A673 (cell line): ENCODE measurements at regions of chr14 and their contacts with region 1.

Region 1: GRCh38 chr14:91418387-91419043 is 895 bp upstream of the CCDC88C start:
- DNase-seq: peak; percentile 78
- H3K4me3 ChIP-seq: peak overlapping the region; percentile 89
- H3K27ac ChIP-seq: no peak overlapping the region
- H3K4me1 ChIP-seq: peaks cover 17% of the 10 kb centered on the region
- H3K27me3 ChIP-seq: no peaks in the 10 kb centered on the region
- CTCF ChIP-seq: peak; percentile 97

Region 2: DNA sequence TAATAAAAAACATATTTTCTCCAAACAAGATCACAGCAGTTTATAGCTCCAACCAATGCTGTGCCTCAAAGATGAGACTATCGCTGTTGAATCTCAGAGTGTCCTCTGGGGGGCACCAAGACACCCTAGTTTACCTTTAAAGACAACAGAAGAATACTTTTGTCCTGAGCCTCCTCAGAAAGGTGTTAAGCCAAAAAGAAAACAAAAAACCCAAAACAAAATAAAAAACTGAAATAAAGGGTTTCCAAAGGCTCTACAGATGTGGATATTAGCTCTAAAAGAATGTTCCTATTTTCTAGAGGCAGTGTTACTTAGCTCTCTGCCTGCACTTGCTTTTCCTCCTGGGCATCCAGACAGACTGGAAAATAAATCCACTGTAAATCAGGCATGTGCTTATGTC is 515.4 kb before region 1 on chr14:
- CTCF ChIA-PET with region 1: no interaction called
- POLR2A ChIA-PET with region 1: no interaction called
- intact Hi-C with region 1: loop called (anchors 10 kb)
- DNase-seq: peak; percentile 70
- H3K4me3 ChIP-seq: no peak overlapping the region
- H3K27ac ChIP-seq: no peak overlapping the region
- H3K4me1 ChIP-seq: no peaks in the 10 kb centered on the region
- H3K27me3 ChIP-seq: no peaks in the 10 kb centered on the region
- CTCF ChIP-seq: peak; percentile 89

Region 3: DNA sequence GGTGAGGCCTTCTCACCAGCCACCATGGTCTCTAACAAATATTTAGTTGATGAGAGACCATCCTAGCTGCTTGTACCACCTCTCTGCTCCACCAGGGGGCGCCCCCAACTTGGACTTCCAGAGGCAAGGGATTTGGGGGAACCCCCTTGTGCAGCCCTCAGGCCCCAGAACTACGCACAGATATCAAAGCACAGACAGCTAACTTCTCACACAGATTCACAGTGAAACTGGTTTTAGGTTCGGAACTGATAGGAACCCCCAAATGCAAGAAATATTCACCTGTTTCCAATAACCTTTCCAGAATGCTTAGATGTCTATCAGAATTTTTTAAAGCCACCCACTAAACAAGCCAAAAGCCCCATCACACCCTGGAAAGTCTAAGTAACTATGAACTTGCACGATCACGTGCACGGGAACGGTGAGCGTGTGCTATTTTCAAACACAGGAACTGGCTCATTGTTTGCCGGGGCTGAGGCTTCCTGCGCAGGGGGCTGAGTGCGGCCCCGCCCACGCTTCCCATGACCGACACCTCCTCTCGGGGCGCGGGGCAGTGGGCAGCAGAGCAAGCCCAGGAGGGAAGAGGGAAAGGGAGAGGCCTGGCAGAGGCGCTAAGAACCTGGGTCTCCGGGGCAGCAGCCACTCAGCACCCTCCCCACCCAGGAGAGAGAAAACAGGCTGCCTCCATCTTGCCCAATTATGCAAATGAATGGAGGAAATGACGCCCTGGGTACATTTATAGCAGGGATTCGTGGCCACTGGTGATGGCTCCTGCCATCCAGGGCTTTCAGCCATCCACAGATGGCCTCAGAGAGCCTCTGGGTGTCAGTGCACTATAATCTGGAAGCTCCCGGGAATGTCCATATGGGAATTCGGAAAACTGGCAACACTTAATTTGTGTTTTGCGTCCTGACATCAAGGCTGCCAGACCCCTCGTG is 94.6 kb before region 1 on chr14:
- CTCF ChIA-PET with region 1: interaction called, 19 read pairs
- POLR2A ChIA-PET with region 1: no interaction called
- intact Hi-C with region 1: loop called (anchors 1 kb)
- DNase-seq: peak; percentile 84
- H3K4me3 ChIP-seq: peak overlapping the region; percentile 28
- H3K27ac ChIP-seq: peak overlapping the region; percentile 60
- H3K4me1 ChIP-seq: peaks cover 15% of the 10 kb centered on the region
- H3K27me3 ChIP-seq: no peaks in the 10 kb centered on the region
- CTCF ChIP-seq: peak; percentile 98

Region 4: GRCh38 chr14:91341751-91342154 is 76.8 kb before region 1 on chr14:
- CTCF ChIA-PET with region 1: no interaction called
- POLR2A ChIA-PET with region 1: no interaction called
- intact Hi-C with region 1: no loop called
- DNase-seq: no peak
- H3K4me3 ChIP-seq: no peak overlapping the region
- H3K27ac ChIP-seq: peak overlapping the region; percentile 29
- H3K4me1 ChIP-seq: peaks cover 14% of the 10 kb centered on the region
- H3K27me3 ChIP-seq: no peaks in the 10 kb centered on the region
- CTCF ChIP-seq: no peak

Region 5: GRCh38 chr14:91354979-91355685 is 63.4 kb before region 1 on chr14:
- CTCF ChIA-PET with region 1: no interaction called
- POLR2A ChIA-PET with region 1: no interaction called
- intact Hi-C with region 1: loop called (anchors 5 kb)
- DNase-seq: no peak
- H3K4me3 ChIP-seq: no peak overlapping the region
- H3K27ac ChIP-seq: no peak overlapping the region
- H3K4me1 ChIP-seq: peaks cover 53% of the 10 kb centered on the region
- H3K27me3 ChIP-seq: no peaks in the 10 kb centered on the region
- CTCF ChIP-seq: peak; percentile 53

Region 6: GRCh38 chr14:91911474-91912032 is 493.0 kb after region 1 on chr14:
- CTCF ChIA-PET with region 1: no interaction called
- POLR2A ChIA-PET with region 1: no interaction called
- intact Hi-C with region 1: loop called (anchors 10 kb)
- DNase-seq: peak; percentile 80
- H3K4me3 ChIP-seq: no peak overlapping the region
- H3K27ac ChIP-seq: no peak overlapping the region
- H3K4me1 ChIP-seq: no peaks in the 10 kb centered on the region
- H3K27me3 ChIP-seq: no peaks in the 10 kb centered on the region
- CTCF ChIP-seq: peak; percentile 65